PC-9 (cell line): ENCODE measurements at regions of chr7 and their contacts with region 1.

Region 1: GRCh38 chr7:1638215-1638661 is 31.8 kb upstream of the ELFN1 start:
- DNase-seq: no peak
- H3K4me3 ChIP-seq: no peak overlapping the region
- H3K27ac ChIP-seq: no peak overlapping the region
- H3K4me1 ChIP-seq: no peaks in the 10 kb centered on the region
- H3K27me3 ChIP-seq: peaks cover 43% of the 10 kb centered on the region
- CTCF ChIP-seq: no peak

Region 2: DNA sequence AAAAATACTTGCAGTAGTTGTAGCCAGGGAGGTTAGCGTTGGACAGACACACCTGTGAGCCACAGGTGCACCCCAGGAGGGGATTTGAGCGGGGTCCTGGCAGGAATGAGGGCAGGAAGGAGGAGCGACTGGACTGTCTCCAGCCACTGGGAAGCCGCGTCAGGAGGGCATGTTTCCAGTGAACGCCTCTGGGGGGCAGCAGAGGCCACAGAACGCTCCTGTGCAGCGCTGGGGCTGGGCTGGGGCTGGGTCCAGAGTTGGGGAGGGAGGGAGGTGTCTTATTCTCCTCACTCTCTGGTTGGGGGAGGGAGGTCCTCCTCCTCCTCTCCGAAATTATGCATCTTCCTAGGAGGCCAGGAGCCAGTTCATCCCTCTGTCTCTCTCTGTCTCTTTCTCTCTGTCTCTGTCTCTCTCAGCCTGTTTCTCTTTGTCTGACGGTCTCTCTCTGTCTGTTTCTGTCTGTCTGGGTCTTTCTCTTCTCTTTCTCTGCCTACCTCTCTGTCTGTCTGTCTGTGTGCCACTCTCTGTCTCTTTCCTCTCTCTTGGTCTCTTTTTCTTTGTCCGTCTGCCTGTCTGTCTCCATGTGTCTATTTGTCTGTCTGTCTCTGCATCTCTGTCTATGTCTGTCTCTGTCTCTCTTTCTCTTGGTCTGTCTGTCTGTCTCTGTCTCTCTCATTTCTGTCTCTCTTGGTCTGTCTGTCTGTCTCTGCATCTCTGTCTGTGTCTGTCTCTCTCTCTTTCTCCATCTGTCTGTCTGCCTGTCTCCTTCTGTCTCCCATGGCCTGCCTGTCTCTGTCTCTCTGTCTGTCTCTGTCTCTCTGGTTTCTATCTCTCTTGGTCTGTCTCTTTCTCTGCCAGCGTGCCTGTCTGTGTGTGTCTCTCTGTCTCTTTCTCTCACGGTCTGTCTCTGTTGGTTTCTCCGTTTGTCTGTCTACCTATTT is 58.5 kb before region 1 on chr7:
- CTCF ChIA-PET with region 1: no interaction called
- POLR2A ChIA-PET with region 1: no interaction called
- intact Hi-C with region 1: no loop called
- DNase-seq: peak in 1 of 2 experiments; percentile 78
- H3K4me3 ChIP-seq: no peak overlapping the region
- H3K27ac ChIP-seq: no peak overlapping the region
- H3K4me1 ChIP-seq: no peaks in the 10 kb centered on the region
- H3K27me3 ChIP-seq: peaks cover 8% of the 10 kb centered on the region
- CTCF ChIP-seq: peak; percentile 92

Region 3: DNA sequence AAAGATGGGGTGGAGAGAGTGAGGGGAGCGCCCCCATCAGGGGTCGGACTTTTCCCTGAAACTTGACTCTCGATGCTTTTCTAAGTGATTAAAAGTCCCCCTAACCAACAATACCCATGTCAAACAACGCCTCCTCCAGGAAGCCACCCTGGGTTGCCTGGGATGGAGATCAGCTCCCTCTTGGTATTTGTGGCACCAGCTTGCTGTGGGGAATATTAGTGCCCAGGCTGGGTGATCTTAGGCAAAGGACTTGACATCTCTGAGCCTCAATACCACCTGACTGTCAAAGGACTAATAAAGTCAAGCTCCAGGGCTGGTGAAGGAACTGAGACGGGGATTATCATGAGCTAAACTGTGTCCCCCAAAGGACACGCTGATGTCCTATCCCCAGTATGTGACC is 13.7 kb after region 1 on chr7:
- CTCF ChIA-PET with region 1: interaction called, 23 read pairs
- POLR2A ChIA-PET with region 1: no interaction called
- intact Hi-C with region 1: no loop called
- DNase-seq: no peak
- H3K4me3 ChIP-seq: no peak overlapping the region
- H3K27ac ChIP-seq: no peak overlapping the region
- H3K4me1 ChIP-seq: no peaks in the 10 kb centered on the region
- H3K27me3 ChIP-seq: peaks cover 73% of the 10 kb centered on the region
- CTCF ChIP-seq: no peak